PC-3 (cell line): ENCODE measurements at regions of chr17 and their contacts with region 1.

Region 1: GRCh38 chr17:77287432-77288071 is 146.8 kb downstream of the SEC14L1 start:
- DNase-seq: peak; percentile 98
- ATAC-seq: peak; percentile 44
- H3K4me3 ChIP-seq: peak overlapping the region; percentile 72
- H3K27ac ChIP-seq: peak overlapping the region; percentile 96
- H3K4me1 ChIP-seq: peaks cover 76% of the 10 kb centered on the region
- H3K27me3 ChIP-seq: no peaks in the 10 kb centered on the region
- CTCF ChIP-seq: no peak

Region 2: DNA sequence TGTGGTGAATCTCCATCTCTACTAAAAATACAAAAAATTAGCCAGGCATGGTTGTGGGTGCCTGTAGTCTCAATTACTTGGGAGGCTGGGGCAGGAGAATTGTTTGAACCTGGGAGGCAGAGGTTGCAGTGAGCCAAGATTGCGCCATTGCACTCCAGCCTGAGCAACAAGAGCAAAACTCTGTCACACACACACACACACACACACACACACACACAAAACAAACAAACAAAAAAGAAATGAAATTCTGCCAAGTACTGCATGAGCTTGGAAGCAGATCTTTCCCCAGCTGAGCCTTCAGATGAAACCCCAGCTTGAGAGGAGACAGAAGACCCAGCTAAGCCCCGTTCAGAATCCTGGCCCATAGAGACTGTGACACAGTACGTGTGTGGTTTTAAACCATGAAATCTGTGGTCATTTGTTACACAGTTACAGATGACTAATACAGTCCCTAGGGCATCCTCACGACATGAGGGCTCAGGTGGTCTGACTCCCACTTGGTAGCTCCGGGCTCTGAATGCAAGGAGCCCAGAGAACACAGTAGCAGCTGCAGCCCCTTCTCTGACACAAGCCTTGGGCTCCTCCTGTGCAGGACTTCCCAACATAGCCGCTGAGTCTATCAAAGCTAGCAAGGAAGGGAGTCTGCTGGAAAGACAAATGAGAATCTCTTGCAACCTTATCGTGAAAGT is 14.0 kb before region 1 on chr17:
- CTCF ChIA-PET with region 1: no interaction called
- POLR2A ChIA-PET with region 1: no interaction called
- intact Hi-C with region 1: no loop called
- DNase-seq: peak; percentile 49
- ATAC-seq: peak; percentile 46
- H3K4me3 ChIP-seq: no peak overlapping the region
- H3K27ac ChIP-seq: no peak overlapping the region
- H3K4me1 ChIP-seq: peaks cover 14% of the 10 kb centered on the region; the same call in 1 of the 2 replicates
- H3K27me3 ChIP-seq: no peaks in the 10 kb centered on the region
- CTCF ChIP-seq: no peak

Region 3: GRCh38 chr17:77424585-77425344 is 137.2 kb after region 1 on chr17:
- CTCF ChIA-PET with region 1: no interaction called
- POLR2A ChIA-PET with region 1: interaction called, 12 read pairs
- intact Hi-C with region 1: loop called (anchors 2 kb)
- DNase-seq: no peak
- ATAC-seq: no peak
- H3K4me3 ChIP-seq: no peak overlapping the region
- H3K27ac ChIP-seq: peak overlapping the region; percentile 87
- H3K4me1 ChIP-seq: peaks cover 87% of the 10 kb centered on the region
- H3K27me3 ChIP-seq: no peaks in the 10 kb centered on the region
- CTCF ChIP-seq: no peak